Activated CD4-positive, alpha-beta T cell treated with anti-CD3 and anti-CD28 coated beads, Interleukin-2, amount 10 ng/mL, durations not matched to agents 7 days and 5 days (primary cell): ENCODE measurements at regions of chr3 and their contacts with region 1.

Region 1: DNA sequence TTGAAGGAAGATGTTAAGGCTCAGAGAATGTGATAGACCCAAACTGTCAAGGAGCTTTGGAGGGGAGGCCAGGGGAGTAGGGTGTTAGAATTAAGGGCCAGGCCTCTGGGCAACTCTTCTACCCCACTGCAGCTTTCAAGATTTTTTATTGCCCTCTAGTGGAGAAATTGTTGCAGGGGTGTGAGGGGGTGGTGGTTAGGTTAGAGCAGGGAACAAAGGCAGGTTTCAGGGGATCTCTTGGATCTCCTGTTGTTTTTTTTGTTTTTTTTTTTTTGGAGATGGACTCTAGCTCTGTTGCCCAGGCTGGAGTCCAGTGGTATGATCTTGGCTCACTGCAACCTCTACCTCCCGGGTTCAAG is 1.4 kb upstream of the SEC13 start:
- DNase-seq: peak; percentile 49
- H3K4me3 Mint-ChIP-seq: no peak overlapping the region
- H3K27ac Mint-ChIP-seq: no peak overlapping the region
- H3K4me1 Mint-ChIP-seq: peaks cover 27% of the 10 kb centered on the region
- H3K27me3 Mint-ChIP-seq: peaks cover 15% of the 10 kb centered on the region

Region 2: GRCh38 chr3:9373465-9373864 is 948.9 kb before region 1 on chr3:
- CTCF ChIA-PET with region 1: no interaction called
- POLR2A ChIA-PET with region 1: interaction called, 10 read pairs
- DNase-seq: no peak
- H3K4me3 Mint-ChIP-seq: no peak overlapping the region
- H3K27ac Mint-ChIP-seq: peak overlapping the region; percentile 10
- H3K4me1 Mint-ChIP-seq: peaks cover 39% of the 10 kb centered on the region
- H3K27me3 Mint-ChIP-seq: no peaks in the 10 kb centered on the region

Region 3: DNA sequence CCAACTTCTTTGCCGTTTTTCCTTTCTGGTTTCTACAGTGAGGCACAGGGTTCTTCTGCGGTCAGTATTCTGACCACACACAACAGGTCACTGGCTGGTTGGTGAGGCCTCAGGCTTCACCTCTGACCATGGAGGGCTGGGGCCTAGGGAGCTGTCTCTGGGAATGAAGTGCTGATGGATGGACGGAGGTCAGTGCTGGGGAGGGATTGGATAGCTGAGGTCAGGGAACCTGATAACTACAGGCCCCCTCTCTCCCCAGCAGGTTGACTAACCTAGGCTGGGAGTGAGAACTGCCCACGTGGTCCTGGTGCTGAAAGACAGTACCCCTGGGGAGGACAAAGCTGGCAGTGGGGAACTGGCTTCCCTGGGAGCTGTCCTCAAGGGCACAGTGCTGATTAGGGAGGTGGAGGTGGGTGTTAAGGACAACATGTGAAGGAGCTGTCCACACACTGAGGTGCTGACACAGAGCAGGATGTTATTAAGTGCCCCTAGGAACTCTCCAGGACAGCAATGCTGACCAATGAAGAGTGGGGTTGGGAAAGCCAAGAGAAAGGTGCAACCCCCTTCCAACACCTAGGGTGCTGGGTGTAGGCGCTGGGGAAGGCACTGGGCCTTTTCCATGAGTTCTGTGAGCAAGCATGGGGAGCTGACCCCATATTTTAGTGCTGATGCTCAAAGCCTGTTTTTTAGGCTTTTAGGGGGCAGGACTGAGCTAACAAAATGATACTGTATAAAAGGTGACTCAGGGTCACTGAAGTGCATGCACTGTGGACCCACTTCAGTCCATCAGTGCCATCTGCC is 137.8 kb after region 1 on chr3:
- CTCF ChIA-PET with region 1: no interaction called
- POLR2A ChIA-PET with region 1: no interaction called
- DNase-seq: peak; percentile 74
- H3K4me3 Mint-ChIP-seq: no peak overlapping the region
- H3K27ac Mint-ChIP-seq: no peak overlapping the region
- H3K4me1 Mint-ChIP-seq: no peaks in the 10 kb centered on the region
- H3K27me3 Mint-ChIP-seq: peaks cover 5% of the 10 kb centered on the region